Cardiac septum (tissue), 1 donor: ENCODE measurements at regions of chr14 and their contacts with region 1.

Region 1: GRCh38 chr14:31420319-31421111 is at the start of gene HEATR5A:
- DNase-seq: peak; percentile 98
- total RNA-seq, gene HEATR5A: 49.5 TPM

Region 2: GRCh38 chr14:30873308-30874119 is 547.0 kb before region 1 on chr14:
- intact Hi-C with region 1: no loop called
- DNase-seq: no peak

Region 3: DNA sequence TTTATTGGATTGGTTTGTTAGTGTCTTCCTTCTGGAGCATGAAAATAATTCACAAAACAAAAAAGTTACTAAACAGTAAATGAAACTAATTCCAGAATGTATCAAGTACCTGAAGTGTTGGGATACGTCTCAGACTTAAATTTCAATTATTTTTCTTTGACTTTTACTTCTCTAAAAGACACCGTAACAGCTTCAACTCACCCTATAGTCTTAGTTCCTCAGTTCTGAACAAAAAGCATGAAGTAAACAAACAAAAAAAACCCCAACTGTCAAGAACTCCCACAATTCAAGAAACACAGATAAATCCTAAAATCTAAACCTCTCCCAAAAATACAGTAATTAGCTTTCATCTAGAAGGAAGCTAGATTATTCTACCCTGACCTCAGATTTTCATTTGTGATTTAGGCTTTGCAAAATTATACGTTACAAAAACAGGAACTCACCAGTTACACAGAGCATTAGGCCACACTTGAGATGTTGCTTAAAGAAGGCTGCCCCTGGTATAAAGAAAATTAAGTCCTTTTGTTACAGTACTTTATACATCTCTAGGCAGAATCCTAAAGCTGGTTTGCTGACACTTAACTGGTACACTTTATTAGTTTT is 10.4 kb before region 1 on chr14:
- intact Hi-C with region 1: no loop called
- DNase-seq: no peak

Region 4: GRCh38 chr14:31456841-31457664 is 36.5 kb after region 1 on chr14 and contains the start of gene DTD2:
- intact Hi-C with region 1: loop called (anchors 2 kb)
- DNase-seq: peak; percentile 98
- total RNA-seq, gene DTD2: 5.6 TPM